H1 (cell line): ENCODE measurements at regions of chr17 and their contacts with region 1.

Region 1: GRCh38 chr17:10463402-10463801 is 6.0 kb downstream of the MYH4 start:
- DNase-seq: no peak
- H3K4me3 ChIP-seq: no peak overlapping the region
- H3K27ac ChIP-seq: no peak overlapping the region
- H3K4me1 ChIP-seq: no peaks in the 10 kb centered on the region
- H3K27me3 ChIP-seq: no peaks in the 10 kb centered on the region
- CTCF ChIP-seq: peak in 2 of 3 experiments; percentile 20 to 42; a peak in 2 of 4 replicates
- EP300 ChIP-seq: no peak
- POLR2A ChIP-seq: no peak
- RAD21 ChIP-seq: peak in 1 of 2 experiments; percentile 16; a peak in 1 of 4 replicates

Region 2: DNA sequence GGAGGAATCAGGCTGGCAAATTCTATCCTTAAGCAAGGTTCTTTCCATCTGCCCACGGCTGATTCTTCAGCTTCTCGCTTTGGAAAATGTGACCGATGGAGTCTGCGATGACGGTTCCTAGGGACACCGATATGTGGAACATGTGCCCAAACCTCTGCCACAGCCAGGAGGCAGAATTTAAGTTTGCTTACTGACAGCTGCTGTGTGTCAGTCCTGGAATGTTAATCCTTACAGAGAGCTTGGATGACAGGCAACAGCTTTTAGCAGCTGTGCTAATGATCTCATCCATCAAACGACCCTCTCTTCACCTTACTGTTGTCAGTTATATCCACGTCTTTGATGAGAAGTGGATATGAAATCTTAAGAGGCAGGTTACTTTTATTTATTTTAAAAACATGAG is 79.2 kb before region 1 on chr17:
- CTCF ChIA-PET with region 1: no interaction called
- POLR2A ChIA-PET with region 1: no interaction called
- DNase-seq: no peak
- H3K4me3 ChIP-seq: no peak overlapping the region
- H3K27ac ChIP-seq: no peak overlapping the region
- H3K4me1 ChIP-seq: peaks cover 0 to 3% (median 0%) of the 10 kb centered on the region in 4 experiments; a peak in 3 of 7 replicates
- H3K27me3 ChIP-seq: no peaks in the 10 kb centered on the region
- CTCF ChIP-seq: no peak
- EP300 ChIP-seq: no peak
- POLR2A ChIP-seq: no peak
- RAD21 ChIP-seq: no peak

Region 3: GRCh38 chr17:10447026-10447931 is 16.1 kb before region 1 on chr17:
- CTCF ChIA-PET with region 1: interaction called, 16 read pairs
- POLR2A ChIA-PET with region 1: no interaction called
- DNase-seq: no peak
- H3K4me3 ChIP-seq: no peak overlapping the region
- H3K27ac ChIP-seq: no peak overlapping the region
- H3K4me1 ChIP-seq: no peaks in the 10 kb centered on the region
- H3K27me3 ChIP-seq: no peaks in the 10 kb centered on the region
- CTCF ChIP-seq: no peak
- EP300 ChIP-seq: no peak
- POLR2A ChIP-seq: no peak
- RAD21 ChIP-seq: no peak

Region 4: GRCh38 chr17:10527419-10527818 is 64.0 kb after region 1 on chr17:
- CTCF ChIA-PET with region 1: no interaction called
- POLR2A ChIA-PET with region 1: no interaction called
- DNase-seq: no peak
- H3K4me3 ChIP-seq: no peak overlapping the region
- H3K27ac ChIP-seq: no peak overlapping the region
- H3K4me1 ChIP-seq: no peaks in the 10 kb centered on the region
- H3K27me3 ChIP-seq: no peaks in the 10 kb centered on the region
- CTCF ChIP-seq: no peak
- EP300 ChIP-seq: no peak
- POLR2A ChIP-seq: no peak
- RAD21 ChIP-seq: no peak